Gastrocnemius medialis (tissue), 4 donors: ENCODE measurements at regions of chr16 and their contacts with region 1.

Region 1: DNA sequence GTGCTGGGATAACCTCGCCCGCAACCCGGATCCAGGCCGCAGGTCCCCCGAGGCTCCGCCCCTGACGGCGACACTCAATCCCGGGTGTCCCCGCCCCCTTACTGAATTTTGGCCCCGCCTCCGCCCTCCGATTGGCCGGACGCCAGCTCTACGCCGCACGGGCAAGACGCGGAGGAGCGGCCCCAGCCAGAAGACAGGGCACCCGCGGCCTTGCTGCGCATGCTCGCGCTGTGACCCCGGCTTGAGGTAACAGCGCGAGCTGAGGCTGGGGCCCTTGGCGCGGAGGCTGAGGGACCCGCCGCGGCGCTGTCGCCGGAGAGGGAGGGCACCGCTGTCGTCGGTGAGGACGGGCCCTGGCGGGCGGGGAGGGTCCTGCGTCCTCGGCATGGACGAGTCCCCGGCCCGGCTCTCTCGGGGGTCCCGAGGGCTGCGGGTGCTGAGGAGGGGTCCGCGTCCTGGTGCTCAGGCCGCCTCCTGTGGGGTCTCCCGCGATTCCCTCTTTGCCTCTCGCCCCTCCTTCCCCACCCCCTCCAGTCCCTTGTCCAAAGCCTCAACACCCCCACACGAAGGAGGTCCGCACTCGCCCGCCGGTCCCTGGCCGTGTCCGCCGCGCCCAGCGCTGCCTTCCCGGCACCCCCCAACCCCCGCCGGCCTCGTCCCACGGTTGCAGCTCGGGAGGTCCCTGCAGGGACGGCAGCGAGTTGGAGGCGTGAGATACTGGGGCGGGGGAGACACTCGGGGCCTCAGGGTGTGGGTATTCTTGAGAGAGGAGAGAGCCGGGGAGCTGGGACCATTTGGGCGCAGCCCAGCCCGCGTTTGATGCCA is at the start of gene FLYWCH2:
- DNase-seq: peak; percentile 94 to 98
- ATAC-seq: peak; percentile 83 to 89
- H3K4me3 ChIP-seq: peak within 1 kb of the TSS; percentile 74 to 94 (median 84)
- H3K27ac ChIP-seq: peak within 1 kb of the TSS; percentile 91 to 98 (median 92)
- H3K4me1 ChIP-seq: peaks cover 6% of the 10 kb centered on the region in 2 donors
- H3K27me3 ChIP-seq: no peaks in the 10 kb centered on the region
- CTCF ChIP-seq: peak; percentile 6 to 56 (median 31)
- POLR2A ChIP-seq: peak; percentile 46 to 68
- total RNA-seq, gene FLYWCH2: 19.5 to 54.5 (median 30.2) TPM

Region 2: DNA sequence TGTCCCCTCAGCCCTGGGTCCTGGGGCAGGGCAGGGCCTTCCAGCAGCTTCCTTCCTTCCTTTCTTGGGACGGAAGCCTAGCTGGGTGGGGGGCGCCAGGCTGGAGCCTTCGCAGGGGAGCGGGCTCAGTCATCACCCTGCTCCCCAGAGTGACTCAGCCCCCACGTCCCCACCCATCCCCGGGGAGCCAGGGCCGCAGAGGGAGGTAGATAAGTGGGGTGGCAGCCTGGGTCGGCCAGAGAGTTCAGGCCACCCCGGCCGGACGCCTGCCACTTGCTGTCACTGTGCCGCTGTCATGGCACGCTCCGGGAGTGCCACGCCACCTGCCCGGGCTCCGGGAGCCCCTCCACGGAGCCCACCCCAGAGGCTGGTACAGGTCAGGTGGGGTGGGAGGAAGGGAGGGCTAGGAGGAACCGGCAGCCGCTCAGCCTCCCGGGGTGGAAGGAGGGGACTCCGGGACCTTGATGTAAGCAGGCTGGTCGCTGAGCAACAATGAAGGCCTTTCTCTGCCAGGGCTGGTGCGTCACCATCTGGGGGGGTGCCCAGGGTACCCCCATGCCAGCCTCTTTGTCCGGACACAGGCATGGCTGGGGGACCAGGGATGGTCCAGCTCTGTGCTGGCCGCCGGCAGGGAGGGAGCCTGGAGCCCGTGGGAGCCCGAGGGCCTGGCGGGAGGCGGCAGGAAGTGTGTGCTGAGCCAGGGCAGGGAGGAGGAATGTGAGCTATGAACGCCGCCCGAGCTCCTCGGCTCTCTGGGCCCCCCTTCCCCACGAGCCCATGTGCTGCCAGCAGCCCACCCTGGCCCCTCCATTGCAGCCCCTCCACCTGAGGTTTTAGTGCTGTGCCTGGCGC is 850.0 kb before region 1 on chr16:
- in situ Hi-C with region 1: no loop called
- intact Hi-C with region 1: no loop called
- DNase-seq: no peak
- ATAC-seq: peak; percentile 31 to 35
- H3K4me3 ChIP-seq: peak overlapping the region; percentile 48 to 62 (median 54)
- H3K27ac ChIP-seq: peak overlapping the region; percentile 76 to 85 (median 78)
- H3K4me1 ChIP-seq: peaks cover 4 to 28% of the 10 kb centered on the region in 2 donors
- H3K27me3 ChIP-seq: no peaks in the 10 kb centered on the region
- CTCF ChIP-seq: no peak
- POLR2A ChIP-seq: no peak

Region 3: DNA sequence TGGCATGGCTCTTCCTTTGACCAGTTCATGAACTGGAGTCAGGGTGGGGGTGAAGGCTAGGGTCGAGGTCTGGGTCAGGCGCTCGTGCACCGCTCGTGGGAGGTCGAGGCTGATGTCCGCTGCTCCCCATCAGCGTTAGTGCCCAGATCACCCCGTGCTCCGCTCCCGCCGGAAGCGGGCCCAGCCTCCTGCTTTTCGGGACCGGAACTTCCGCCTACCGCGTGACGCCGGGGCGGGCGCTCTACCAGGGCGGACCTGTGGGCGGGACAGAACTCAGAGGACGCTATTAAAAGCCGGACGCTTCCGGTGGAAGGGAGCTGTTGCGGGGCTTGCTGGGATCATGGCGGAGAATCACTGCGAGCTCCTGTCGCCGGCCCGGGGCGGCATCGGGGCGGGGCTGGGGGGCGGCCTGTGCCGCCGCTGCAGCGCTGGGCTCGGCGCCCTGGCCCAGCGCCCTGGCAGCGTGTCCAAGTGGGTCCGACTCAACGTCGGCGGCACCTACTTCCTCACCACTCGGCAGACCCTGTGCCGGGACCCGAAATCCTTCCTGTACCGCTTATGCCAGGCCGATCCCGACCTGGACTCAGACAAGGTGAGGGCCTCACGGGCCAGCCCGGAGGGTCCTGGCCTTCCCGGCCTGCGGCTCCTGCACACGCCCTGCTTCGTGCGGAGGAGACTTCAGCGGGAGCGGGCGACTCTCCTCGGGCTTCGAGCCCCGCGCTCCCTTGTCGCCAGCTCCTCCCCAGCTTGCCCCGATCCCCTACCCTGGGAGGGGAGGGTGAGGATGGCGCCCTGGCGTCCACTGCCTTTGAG is 200.8 kb before region 1 on chr16 and contains the start of gene KCTD5:
- in situ Hi-C with region 1: no loop called
- intact Hi-C with region 1: loop called (anchors 1 kb)
- DNase-seq: peak; percentile 95 to 96
- ATAC-seq: peak; percentile 67 to 87
- H3K4me3 ChIP-seq: peak within 1 kb of the TSS; percentile 68 to 98 (median 78)
- H3K27ac ChIP-seq: peak within 1 kb of the TSS; percentile 82 to 95 (median 89)
- H3K4me1 ChIP-seq: peaks cover 20 to 25% of the 10 kb centered on the region in 2 donors
- H3K27me3 ChIP-seq: no peaks in the 10 kb centered on the region
- CTCF ChIP-seq: peak in 1 of 5 experiments; percentile 44
- POLR2A ChIP-seq: peak; percentile 91 to 95
- total RNA-seq, gene KCTD5: 13.6 to 23.8 (median 14.7) TPM

Region 4: GRCh38 chr16:2854700-2855309 is 28.4 kb before region 1 on chr16:
- in situ Hi-C with region 1: no loop called
- intact Hi-C with region 1: no loop called
- DNase-seq: no peak
- ATAC-seq: no peak
- H3K4me3 ChIP-seq: no peak overlapping the region
- H3K27ac ChIP-seq: no peak overlapping the region
- H3K4me1 ChIP-seq: no peaks in the 10 kb centered on the region
- H3K27me3 ChIP-seq: peaks cover 49 to 60% (median 57%) of the 10 kb centered on the region in 3 donors
- CTCF ChIP-seq: no peak
- POLR2A ChIP-seq: no peak

Region 5: GRCh38 chr16:2867987-2868789 is 15.1 kb before region 1 on chr16:
- in situ Hi-C with region 1: no loop called
- intact Hi-C with region 1: loop called (anchors 1 kb)
- DNase-seq: peak; percentile 71 to 91
- ATAC-seq: peak; percentile 94
- H3K4me3 ChIP-seq: peak overlapping the region; percentile 71 to 79 (median 77)
- H3K27ac ChIP-seq: peak overlapping the region; percentile 87 to 93 (median 88)
- H3K4me1 ChIP-seq: peaks cover 8 to 10% of the 10 kb centered on the region in 2 donors
- H3K27me3 ChIP-seq: no peaks in the 10 kb centered on the region
- CTCF ChIP-seq: peak; percentile 95 to 98 (median 98)
- POLR2A ChIP-seq: peak; percentile 30 to 65

Region 6: DNA sequence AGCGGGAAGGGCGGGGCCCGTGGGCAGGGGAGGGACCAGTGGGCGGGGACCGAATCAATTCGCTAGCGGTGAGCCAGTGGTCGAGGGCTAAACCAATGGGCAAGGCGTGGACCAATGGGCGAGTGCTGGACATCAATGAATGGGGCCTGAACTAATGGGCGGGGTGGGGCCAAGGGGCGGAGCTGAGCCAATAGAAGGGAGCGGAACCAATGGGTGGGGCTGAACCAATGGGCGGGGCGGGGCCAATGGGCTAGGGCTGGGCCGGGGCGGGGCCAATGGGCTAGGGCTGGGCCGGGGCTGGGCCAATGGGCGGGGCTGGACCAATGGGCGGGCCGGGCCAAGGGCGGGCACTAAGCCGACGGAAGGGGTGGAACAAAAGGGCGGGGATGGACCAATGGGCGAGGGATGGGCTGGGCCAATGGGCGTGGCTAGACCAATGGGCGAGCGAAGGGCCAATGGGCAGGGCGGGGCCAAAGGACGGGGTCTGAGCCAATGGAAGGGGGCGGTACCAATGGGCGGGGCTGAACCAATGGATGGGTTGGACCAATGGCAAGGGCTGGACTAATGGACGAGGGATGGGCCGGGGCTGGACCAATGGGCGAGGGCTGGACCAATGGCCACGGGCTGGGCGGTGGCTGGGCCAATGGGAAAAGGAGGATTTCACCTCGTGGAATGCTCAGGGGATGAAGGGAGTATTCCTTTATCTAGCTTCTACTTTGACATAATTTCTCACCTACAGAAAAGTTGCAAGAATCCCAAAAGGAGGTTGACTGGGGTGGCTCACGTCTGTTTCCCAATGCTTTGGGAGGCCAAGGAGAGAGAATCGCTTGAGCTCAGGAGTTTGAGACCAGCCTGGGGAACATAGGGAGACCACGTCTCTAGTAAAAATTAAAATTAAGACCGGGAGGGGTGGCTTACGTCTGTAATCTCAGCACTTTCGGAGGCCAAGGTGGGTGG is 22.5 kb after region 1 on chr16:
- in situ Hi-C with region 1: loop called in 1 of 4 experiments (anchors 5 kb)
- intact Hi-C with region 1: loop called (anchors 1 kb)
- DNase-seq: peak; percentile 100
- ATAC-seq: peak; percentile 83 to 88
- H3K4me3 ChIP-seq: peak overlapping the region; percentile 77 to 91 (median 87)
- H3K27ac ChIP-seq: peak overlapping the region; percentile 91 to 96 (median 94)
- H3K4me1 ChIP-seq: peaks cover 11 to 14% of the 10 kb centered on the region in 2 donors
- H3K27me3 ChIP-seq: no peaks in the 10 kb centered on the region
- CTCF ChIP-seq: no peak
- POLR2A ChIP-seq: no peak

Region 7: DNA sequence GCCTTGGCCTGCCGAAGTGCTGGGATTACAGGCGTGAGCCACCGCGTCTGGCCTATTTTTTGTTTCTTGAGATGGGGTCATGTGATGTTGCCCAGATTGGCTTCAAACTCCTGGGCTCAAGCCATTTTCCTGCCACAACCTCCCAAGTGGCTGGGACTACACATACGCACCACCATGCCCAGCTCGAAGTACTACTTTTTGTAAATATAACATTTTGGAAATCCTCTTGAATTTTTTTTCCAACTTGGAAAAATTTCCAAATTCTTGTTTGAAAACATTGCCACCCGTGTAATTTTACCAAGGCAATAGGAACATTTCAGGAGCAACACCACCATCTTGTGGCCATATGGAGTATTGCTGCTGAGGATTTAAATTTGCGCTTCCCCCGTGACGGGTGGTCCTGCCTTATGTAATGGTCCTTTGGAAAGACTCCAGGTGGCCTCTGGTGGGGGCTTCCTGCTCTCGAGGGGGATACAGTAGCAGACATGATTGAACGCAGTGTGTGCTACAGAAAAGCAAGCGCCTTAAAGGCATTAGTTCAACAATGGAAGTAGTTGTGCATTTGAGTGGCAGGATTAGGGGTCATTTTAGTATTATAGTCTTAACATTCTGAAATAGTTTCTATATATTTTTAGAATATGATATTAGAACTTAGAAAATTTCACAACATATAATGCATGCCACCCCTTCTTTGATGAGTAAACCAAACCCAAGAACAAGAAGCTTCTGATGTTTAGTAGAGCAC is 36.4 kb after region 1 on chr16:
- in situ Hi-C with region 1: loop called in 2 of 4 experiments (anchors 5 to 10 kb)
- intact Hi-C with region 1: loop called (anchors 5 kb)
- DNase-seq: peak; percentile 49 to 70
- ATAC-seq: peak; percentile 84 to 85
- H3K4me3 ChIP-seq: no peak overlapping the region
- H3K27ac ChIP-seq: peak overlapping the region; percentile 64 to 74 (median 66)
- H3K4me1 ChIP-seq: peaks cover 3 to 6% of the 10 kb centered on the region in 2 donors
- H3K27me3 ChIP-seq: no peaks in the 10 kb centered on the region
- CTCF ChIP-seq: peak; percentile 91 to 97 (median 93)
- POLR2A ChIP-seq: no peak

Region 8: GRCh38 chr16:3150346-3151218 is 267.3 kb after region 1 on chr16:
- in situ Hi-C with region 1: no loop called
- intact Hi-C with region 1: loop called (anchors 10 kb)
- DNase-seq: peak; percentile 77 to 88
- ATAC-seq: peak; percentile 83 to 86
- H3K4me3 ChIP-seq: peak overlapping the region; percentile 67 to 87 (median 67)
- H3K27ac ChIP-seq: peak overlapping the region; percentile 68 to 78 (median 72)
- H3K4me1 ChIP-seq: peaks cover 13% of the 10 kb centered on the region in 2 donors
- H3K27me3 ChIP-seq: peaks cover 9 to 22% (median 11%) of the 10 kb centered on the region in 3 donors
- CTCF ChIP-seq: no peak
- POLR2A ChIP-seq: no peak